Panc1 (cell line): ENCODE measurements at regions of chrX and their contacts with region 1.

Region 1: GRCh38 chrX:136431625-136432024 is 56.1 kb upstream of the BRS3 start:
- DNase-seq: no peak
- ATAC-seq: no peak
- H3K4me3 ChIP-seq: no peak overlapping the region
- H3K27ac ChIP-seq: no peak overlapping the region
- H3K4me1 ChIP-seq: no peaks in the 10 kb centered on the region
- H3K27me3 ChIP-seq: no peaks in the 10 kb centered on the region
- CTCF ChIP-seq: no peak

Region 2: GRCh38 chrX:136452614-136453013 is 21.0 kb after region 1 on chrX:
- CTCF ChIA-PET with region 1: interaction called, 12 read pairs
- POLR2A ChIA-PET with region 1: no interaction called
- in situ Hi-C with region 1: no loop called
- intact Hi-C with region 1: no loop called
- DNase-seq: no peak
- ATAC-seq: no peak
- H3K4me3 ChIP-seq: no peak overlapping the region
- H3K27ac ChIP-seq: no peak overlapping the region
- H3K4me1 ChIP-seq: no peaks in the 10 kb centered on the region
- H3K27me3 ChIP-seq: no peaks in the 10 kb centered on the region; the same call in none of the 2 replicates
- CTCF ChIP-seq: no peak